ENCODE measurements at regions of chr11 and their contacts with region 1.

Region 1: GRCh38 chr11:78645226-78646202 is 70.8 kb upstream of the NARS2 start:
- DNase-seq: peak; percentile 80
- H3K4me3 Mint-ChIP-seq: peak overlapping the region; percentile 52
- H3K27ac Mint-ChIP-seq: no peak overlapping the region
- H3K4me1 Mint-ChIP-seq: peaks cover 8% of the 10 kb centered on the region
- H3K27me3 Mint-ChIP-seq: peaks cover 12% of the 10 kb centered on the region
- CTCF ChIP-seq: peak; percentile 97

Region 2: DNA sequence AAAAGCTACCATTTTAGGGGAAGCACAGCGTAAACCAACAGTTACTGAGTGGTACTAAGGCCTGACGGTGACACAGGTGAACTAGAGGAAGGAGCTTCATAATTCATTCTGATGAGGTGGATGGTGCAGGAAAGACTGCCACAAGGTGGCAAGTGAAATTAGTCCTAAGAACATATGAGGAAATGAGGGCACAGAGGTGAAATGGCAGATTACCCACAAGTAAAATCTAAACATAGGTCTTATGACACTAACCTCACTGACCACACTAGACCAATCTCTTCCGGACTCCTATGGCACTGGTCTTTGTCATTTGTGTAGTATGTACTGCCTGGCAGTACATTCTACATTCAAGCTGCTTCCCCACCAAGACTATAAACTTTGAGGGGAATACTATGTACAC is 248.1 kb before region 1 on chr11:
- CTCF ChIA-PET with region 1: no interaction called
- POLR2A ChIA-PET with region 1: no interaction called
- intact Hi-C with region 1: no loop called
- DNase-seq: no peak
- H3K4me3 Mint-ChIP-seq: no peak overlapping the region
- H3K27ac Mint-ChIP-seq: no peak overlapping the region
- H3K4me1 Mint-ChIP-seq: no peaks in the 10 kb centered on the region
- H3K27me3 Mint-ChIP-seq: no peaks in the 10 kb centered on the region
- CTCF ChIP-seq: no peak

Region 3: DNA sequence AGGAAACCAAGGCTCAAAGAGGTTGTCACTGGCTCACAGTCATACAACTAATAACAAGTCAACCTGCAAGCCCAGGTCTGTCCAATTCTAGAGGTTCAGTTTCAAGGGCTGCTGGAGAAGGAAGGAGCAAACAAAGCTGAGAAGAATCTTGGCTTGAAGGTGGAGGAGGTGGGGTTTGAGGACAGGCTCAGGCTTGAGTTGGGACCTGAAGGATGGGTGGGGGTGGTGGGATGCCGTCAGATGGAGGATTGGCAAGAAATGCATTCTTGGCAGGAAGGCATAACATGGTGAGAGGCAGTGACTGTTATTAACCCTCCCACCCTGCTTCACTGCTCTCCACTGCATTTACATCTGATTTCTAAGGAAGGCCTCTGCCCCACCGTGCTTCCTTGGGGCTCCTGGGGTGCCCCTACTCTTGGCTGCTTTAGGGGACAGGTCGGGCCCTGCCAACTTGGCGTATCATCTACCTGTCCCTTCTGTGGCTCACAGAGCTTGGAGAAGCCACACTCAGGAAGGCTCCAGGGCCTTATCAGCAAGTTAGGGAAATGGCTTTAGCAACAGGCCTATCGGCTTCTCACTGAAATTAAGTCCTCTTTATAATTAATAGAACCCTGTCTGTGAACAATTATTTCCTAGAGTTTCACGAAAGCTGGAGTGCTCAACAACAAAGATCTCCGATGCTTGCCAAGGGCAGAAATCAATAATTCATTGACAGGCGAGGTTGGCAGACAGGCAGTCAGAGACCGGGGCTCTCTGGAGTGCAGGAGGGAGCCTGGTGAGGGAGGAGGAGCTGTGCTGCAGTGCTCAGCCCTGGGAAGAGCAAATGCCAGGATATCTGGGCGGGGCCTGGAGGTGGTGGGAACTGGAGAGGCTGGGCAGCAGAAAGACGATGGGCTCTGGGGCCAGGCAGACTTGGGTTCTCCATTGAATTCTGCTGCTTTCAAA is 14.1 kb after region 1 on chr11:
- CTCF ChIA-PET with region 1: interaction called, 47 read pairs
- POLR2A ChIA-PET with region 1: no interaction called
- intact Hi-C with region 1: no loop called
- DNase-seq: peak; percentile 55
- H3K4me3 Mint-ChIP-seq: no peak overlapping the region
- H3K27ac Mint-ChIP-seq: no peak overlapping the region
- H3K4me1 Mint-ChIP-seq: peaks cover 24% of the 10 kb centered on the region
- H3K27me3 Mint-ChIP-seq: no peaks in the 10 kb centered on the region
- CTCF ChIP-seq: no peak

Region 4: DNA sequence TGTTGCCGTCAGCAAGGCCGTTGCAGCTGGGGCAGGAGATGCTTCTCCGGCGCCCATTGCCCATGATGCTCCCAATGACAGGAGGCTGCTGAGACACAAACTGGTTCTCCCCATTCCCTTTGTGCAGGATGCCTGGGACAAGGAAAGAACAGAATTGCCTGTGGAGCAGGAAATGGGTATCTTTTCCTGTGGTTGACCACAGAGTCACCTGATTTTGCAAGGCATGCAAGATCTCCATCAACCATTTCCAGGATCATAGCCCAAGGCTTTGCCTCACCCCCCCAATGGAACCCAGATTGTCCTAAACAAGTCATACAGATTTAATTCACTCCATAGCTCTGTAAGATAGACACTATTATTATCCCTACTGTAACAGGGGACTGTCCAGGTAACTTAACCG is 77.3 kb after region 1 on chr11:
- CTCF ChIA-PET with region 1: interaction called, 166 read pairs
- POLR2A ChIA-PET with region 1: no interaction called
- intact Hi-C with region 1: no loop called
- DNase-seq: no peak
- H3K4me3 Mint-ChIP-seq: no peak overlapping the region
- H3K27ac Mint-ChIP-seq: no peak overlapping the region
- H3K4me1 Mint-ChIP-seq: no peaks in the 10 kb centered on the region
- H3K27me3 Mint-ChIP-seq: no peaks in the 10 kb centered on the region
- CTCF ChIP-seq: no peak

Region 5: GRCh38 chr11:78952890-78953289 is 307.4 kb after region 1 on chr11:
- CTCF ChIA-PET with region 1: interaction called, 176 read pairs
- POLR2A ChIA-PET with region 1: no interaction called
- intact Hi-C with region 1: no loop called
- DNase-seq: no peak
- H3K4me3 Mint-ChIP-seq: no peak overlapping the region
- H3K27ac Mint-ChIP-seq: no peak overlapping the region
- H3K4me1 Mint-ChIP-seq: no peaks in the 10 kb centered on the region
- H3K27me3 Mint-ChIP-seq: no peaks in the 10 kb centered on the region
- CTCF ChIP-seq: no peak

Region 6: DNA sequence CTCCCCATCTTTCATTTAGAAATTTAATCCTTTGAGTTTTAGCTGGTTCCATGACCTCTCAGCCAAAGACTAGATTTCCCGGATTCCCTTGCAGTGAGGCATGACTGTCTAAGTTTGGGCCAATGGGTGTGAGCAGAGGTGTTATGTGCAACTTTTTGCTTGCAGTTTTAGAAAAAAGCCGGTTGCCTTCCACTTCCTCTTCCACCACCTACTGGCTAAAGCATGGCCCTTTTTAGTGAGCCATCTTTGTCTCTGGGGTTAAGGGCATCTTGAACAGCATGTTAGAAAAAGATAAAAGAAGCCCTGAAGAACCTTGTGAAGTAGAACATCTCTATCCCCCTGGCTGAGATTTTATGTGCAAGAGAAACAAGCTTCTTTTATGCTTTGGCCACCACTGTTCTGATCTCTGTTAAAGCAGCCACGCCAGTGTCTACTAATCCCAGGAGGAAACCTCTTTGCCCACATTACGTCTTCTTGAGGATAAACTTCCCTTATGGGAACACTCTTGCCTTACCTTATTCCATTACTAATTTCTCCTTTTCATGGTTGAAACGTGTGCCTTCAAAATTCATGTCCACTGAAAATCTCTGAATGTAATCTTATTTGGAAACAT is 515.4 kb after region 1 on chr11:
- CTCF ChIA-PET with region 1: interaction called, 31 read pairs
- POLR2A ChIA-PET with region 1: no interaction called
- intact Hi-C with region 1: loop called (anchors 2 kb)
- DNase-seq: peak; percentile 63
- H3K4me3 Mint-ChIP-seq: no peak overlapping the region
- H3K27ac Mint-ChIP-seq: no peak overlapping the region
- H3K4me1 Mint-ChIP-seq: peaks cover 30% of the 10 kb centered on the region
- H3K27me3 Mint-ChIP-seq: no peaks in the 10 kb centered on the region
- CTCF ChIP-seq: peak; percentile 31

Region 7: GRCh38 chr11:79413268-79413667 is 767.8 kb after region 1 on chr11:
- CTCF ChIA-PET with region 1: interaction called, 11 read pairs
- POLR2A ChIA-PET with region 1: no interaction called
- intact Hi-C with region 1: no loop called
- DNase-seq: peak; percentile 91
- H3K4me3 Mint-ChIP-seq: no peak overlapping the region
- H3K27ac Mint-ChIP-seq: no peak overlapping the region
- H3K4me1 Mint-ChIP-seq: peaks cover 45% of the 10 kb centered on the region
- H3K27me3 Mint-ChIP-seq: no peaks in the 10 kb centered on the region
- CTCF ChIP-seq: no peak